Naive thymus-derived CD4-positive, alpha-beta T cell (primary cell): ENCODE measurements at regions of chr11 and their contacts with region 1.

Region 1: DNA sequence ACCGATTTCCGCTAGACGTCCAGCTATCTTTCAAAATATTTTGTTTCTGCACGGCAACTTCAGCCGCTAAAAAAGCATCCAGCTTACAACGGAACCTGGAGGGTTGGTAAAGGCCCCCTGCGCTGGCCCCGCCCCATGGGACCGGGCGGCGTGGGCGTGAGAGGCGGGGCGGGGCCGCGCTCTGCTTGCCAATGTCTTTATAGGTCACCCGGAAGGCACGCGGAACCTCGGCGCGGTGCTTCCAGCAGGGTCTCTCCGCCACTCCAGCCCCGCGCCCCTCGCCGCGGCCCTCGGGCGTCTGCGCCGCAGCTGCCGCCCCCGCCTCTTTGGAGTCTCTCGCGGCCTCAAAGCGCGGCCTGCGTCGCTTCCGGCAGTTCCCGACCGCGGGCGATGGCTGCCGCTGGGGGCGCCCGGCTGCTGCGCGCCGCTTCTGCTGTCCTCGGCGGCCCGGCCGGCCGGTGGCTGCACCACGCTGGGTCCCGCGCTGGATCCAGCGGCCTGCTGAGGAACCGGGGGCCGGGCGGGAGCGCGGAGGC is at the start of gene FDX1:
- DNase-seq: peak; percentile 74 to 90 (median 82)
- ATAC-seq: peak; percentile 90
- H3K4me3 ChIP-seq: peak within 1 kb of the TSS; percentile 91
- H3K4me3 Mint-ChIP-seq: peak within 1 kb of the TSS; percentile 88 to 98 (median 98)
- H3K27ac ChIP-seq: peak within 1 kb of the TSS; percentile 87
- H3K27ac Mint-ChIP-seq: peak within 1 kb of the TSS; percentile 92 to 98 (median 97)
- H3K4me1 ChIP-seq: peaks cover 17 to 18% of the 10 kb centered on the region in 2 donors
- H3K4me1 Mint-ChIP-seq: peaks cover 19 to 53% (median 43%) of the 10 kb centered on the region in 7 donors
- H3K27me3 ChIP-seq: no peaks in the 10 kb centered on the region
- H3K27me3 Mint-ChIP-seq: no peaks in the 10 kb centered on the region
- total RNA-seq, gene FDX1: 7.7 to 11.2 (median 10.8) TPM

Region 2: GRCh38 chr11:109946322-109946846 is 483.4 kb before region 1 on chr11:
- CTCF ChIA-PET with region 1: no interaction called
- POLR2A ChIA-PET with region 1: no interaction called
- intact Hi-C with region 1: loop called in 1 of 2 experiments (anchors 1 kb)
- DNase-seq: peak in 7 of 9 donors; percentile 7 to 51 (median 20)
- ATAC-seq: peak; percentile 97
- H3K4me3 ChIP-seq: no peak overlapping the region
- H3K4me3 Mint-ChIP-seq: peak overlapping the region in 7 of 10 donors; percentile 40 to 75 (median 66)
- H3K27ac ChIP-seq: no peak overlapping the region
- H3K27ac Mint-ChIP-seq: no peak overlapping the region
- H3K4me1 ChIP-seq: no peaks in the 10 kb centered on the region
- H3K4me1 Mint-ChIP-seq: peaks cover 0 to 10% (median 9%) of the 10 kb centered on the region in 7 donors
- H3K27me3 ChIP-seq: no peaks in the 10 kb centered on the region
- H3K27me3 Mint-ChIP-seq: peaks cover 0 to 22% (median 11%) of the 10 kb centered on the region in 5 donors

Region 3: DNA sequence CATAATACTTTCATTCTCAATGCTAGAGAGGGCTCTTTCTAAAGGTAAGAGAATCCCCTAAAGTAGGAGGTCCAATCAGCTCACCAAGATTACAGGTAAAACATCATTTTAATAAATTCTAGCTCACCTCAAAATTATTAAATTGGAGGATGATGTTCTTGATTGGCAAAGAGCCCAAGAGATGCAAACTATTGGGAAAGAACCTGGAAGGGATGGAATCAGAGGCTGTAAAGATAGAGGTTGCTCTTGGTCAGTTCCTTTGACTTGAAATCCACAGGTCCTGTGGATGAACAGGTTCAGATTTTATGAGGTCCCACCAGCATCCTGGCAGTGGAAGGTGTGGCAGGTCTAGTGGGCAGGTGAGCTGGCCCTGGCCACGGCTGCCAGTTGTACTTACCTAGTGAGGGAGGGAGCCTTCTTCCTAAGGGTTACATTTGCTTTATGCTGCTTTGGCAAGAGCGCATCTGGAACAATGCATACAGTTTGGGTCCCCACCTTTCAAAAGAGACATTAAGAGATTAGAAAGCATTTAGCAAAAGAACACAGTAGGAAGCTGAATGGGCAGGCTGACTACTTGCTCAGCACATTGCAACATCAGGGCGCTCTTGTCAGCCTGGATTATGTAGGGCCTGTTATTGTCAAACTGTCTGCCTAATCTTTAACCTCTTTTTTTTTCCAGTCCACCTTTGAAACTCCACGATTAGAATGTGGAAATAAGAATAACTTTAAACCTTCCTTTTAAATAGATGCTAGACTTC is 230.4 kb before region 1 on chr11:
- CTCF ChIA-PET with region 1: interaction called, 72 read pairs
- POLR2A ChIA-PET with region 1: no interaction called
- intact Hi-C with region 1: loop called (anchors 1 kb)
- DNase-seq: no peak
- ATAC-seq: no peak
- H3K4me3 ChIP-seq: no peak overlapping the region
- H3K4me3 Mint-ChIP-seq: no peak overlapping the region
- H3K27ac ChIP-seq: no peak overlapping the region
- H3K27ac Mint-ChIP-seq: no peak overlapping the region
- H3K4me1 ChIP-seq: no peaks in the 10 kb centered on the region
- H3K4me1 Mint-ChIP-seq: peaks cover 0 to 4% (median 0%) of the 10 kb centered on the region in 7 donors
- H3K27me3 ChIP-seq: no peaks in the 10 kb centered on the region
- H3K27me3 Mint-ChIP-seq: peaks cover 0 to 9% (median 2%) of the 10 kb centered on the region in 5 donors

Region 4: DNA sequence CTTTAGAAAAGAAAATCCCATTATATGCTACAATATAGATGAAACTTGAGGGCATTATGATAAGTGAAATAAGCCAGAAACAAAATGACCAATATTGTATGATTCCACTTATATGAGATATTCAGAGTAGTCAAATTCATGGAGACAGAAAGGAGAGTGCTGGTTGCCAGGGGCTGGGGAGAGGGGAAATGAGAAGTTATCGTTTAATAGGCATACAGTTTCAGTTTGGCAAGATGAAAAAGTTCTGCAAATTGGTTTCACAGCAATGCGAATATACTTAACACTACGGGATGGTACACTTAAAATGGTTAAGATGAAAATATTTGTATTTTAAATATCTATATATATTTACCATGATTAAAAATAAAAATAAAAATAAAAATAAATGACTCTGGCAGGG is 102.3 kb before region 1 on chr11:
- CTCF ChIA-PET with region 1: no interaction called
- POLR2A ChIA-PET with region 1: no interaction called
- intact Hi-C with region 1: no loop called
- DNase-seq: no peak
- ATAC-seq: no peak
- H3K4me3 ChIP-seq: no peak overlapping the region
- H3K4me3 Mint-ChIP-seq: peak overlapping the region in 8 of 10 donors; percentile 1 to 98 (median 22)
- H3K27ac ChIP-seq: no peak overlapping the region
- H3K27ac Mint-ChIP-seq: peak overlapping the region in 1 of 9 donors; percentile 98
- H3K4me1 ChIP-seq: peaks cover 0 to 11% of the 10 kb centered on the region in 2 donors
- H3K4me1 Mint-ChIP-seq: peaks cover 0 to 33% (median 12%) of the 10 kb centered on the region in 7 donors
- H3K27me3 ChIP-seq: no peaks in the 10 kb centered on the region
- H3K27me3 Mint-ChIP-seq: peaks cover 0 to 18% (median 4%) of the 10 kb centered on the region in 5 donors

Region 5: GRCh38 chr11:110907629-110908028 is 477.8 kb after region 1 on chr11:
- CTCF ChIA-PET with region 1: no interaction called
- POLR2A ChIA-PET with region 1: interaction called, 3 read pairs
- intact Hi-C with region 1: loop called in 1 of 2 experiments (anchors 1 kb)
- DNase-seq: peak in 6 of 9 donors; percentile 43 to 73 (median 65)
- ATAC-seq: peak; percentile 86
- H3K4me3 ChIP-seq: no peak overlapping the region
- H3K4me3 Mint-ChIP-seq: peak overlapping the region; percentile 42 to 76 (median 62)
- H3K27ac ChIP-seq: no peak overlapping the region
- H3K27ac Mint-ChIP-seq: peak overlapping the region; percentile 69 to 93 (median 82)
- H3K4me1 ChIP-seq: peaks cover 16 to 27% of the 10 kb centered on the region in 2 donors
- H3K4me1 Mint-ChIP-seq: peaks cover 18 to 47% (median 33%) of the 10 kb centered on the region in 7 donors
- H3K27me3 ChIP-seq: no peaks in the 10 kb centered on the region
- H3K27me3 Mint-ChIP-seq: peaks cover 0 to 5% (median 0%) of the 10 kb centered on the region in 5 donors

Region 6: GRCh38 chr11:111766093-111766833 is 1336.5 kb after region 1 on chr11 and contains the start of gene PPP2R1B:
- CTCF ChIA-PET with region 1: no interaction called
- POLR2A ChIA-PET with region 1: no interaction called
- intact Hi-C with region 1: loop called in 1 of 2 experiments (anchors 2 kb)
- DNase-seq: peak; percentile 50 to 78 (median 69)
- ATAC-seq: peak; percentile 98
- H3K4me3 ChIP-seq: peak within 1 kb of the TSS; percentile 95
- H3K4me3 Mint-ChIP-seq: peak within 1 kb of the TSS; percentile 94 to 100 (median 98)
- H3K27ac ChIP-seq: peak within 1 kb of the TSS; percentile 86
- H3K27ac Mint-ChIP-seq: peak within 1 kb of the TSS; percentile 83 to 99 (median 95)
- H3K4me1 ChIP-seq: peaks cover 7% of the 10 kb centered on the region in 2 donors
- H3K4me1 Mint-ChIP-seq: peaks cover 25 to 48% (median 38%) of the 10 kb centered on the region in 7 donors
- H3K27me3 ChIP-seq: no peaks in the 10 kb centered on the region
- H3K27me3 Mint-ChIP-seq: no peaks in the 10 kb centered on the region
- total RNA-seq, gene PPP2R1B: 25.8 to 49.2 (median 34.0) TPM

Region 7: GRCh38 chr11:112289588-112290492 is 1860.0 kb after region 1 on chr11:
- CTCF ChIA-PET with region 1: no interaction called
- POLR2A ChIA-PET with region 1: no interaction called
- intact Hi-C with region 1: loop called in 1 of 2 experiments (anchors 10 kb)
- DNase-seq: peak; percentile 77 to 90 (median 86)
- ATAC-seq: peak; percentile 99
- H3K4me3 ChIP-seq: peak overlapping the region; percentile 61
- H3K4me3 Mint-ChIP-seq: peak overlapping the region; percentile 74 to 87 (median 84)
- H3K27ac ChIP-seq: peak overlapping the region; percentile 66
- H3K27ac Mint-ChIP-seq: peak overlapping the region; percentile 0 to 88 (median 51)
- H3K4me1 ChIP-seq: peaks cover 0 to 5% of the 10 kb centered on the region in 2 donors
- H3K4me1 Mint-ChIP-seq: peaks cover 9 to 44% (median 38%) of the 10 kb centered on the region in 7 donors
- H3K27me3 ChIP-seq: no peaks in the 10 kb centered on the region
- H3K27me3 Mint-ChIP-seq: peaks cover 0 to 9% (median 0%) of the 10 kb centered on the region in 5 donors